ENCODE measurements at regions of chr6 and their contacts with region 1.

Region 1: DNA sequence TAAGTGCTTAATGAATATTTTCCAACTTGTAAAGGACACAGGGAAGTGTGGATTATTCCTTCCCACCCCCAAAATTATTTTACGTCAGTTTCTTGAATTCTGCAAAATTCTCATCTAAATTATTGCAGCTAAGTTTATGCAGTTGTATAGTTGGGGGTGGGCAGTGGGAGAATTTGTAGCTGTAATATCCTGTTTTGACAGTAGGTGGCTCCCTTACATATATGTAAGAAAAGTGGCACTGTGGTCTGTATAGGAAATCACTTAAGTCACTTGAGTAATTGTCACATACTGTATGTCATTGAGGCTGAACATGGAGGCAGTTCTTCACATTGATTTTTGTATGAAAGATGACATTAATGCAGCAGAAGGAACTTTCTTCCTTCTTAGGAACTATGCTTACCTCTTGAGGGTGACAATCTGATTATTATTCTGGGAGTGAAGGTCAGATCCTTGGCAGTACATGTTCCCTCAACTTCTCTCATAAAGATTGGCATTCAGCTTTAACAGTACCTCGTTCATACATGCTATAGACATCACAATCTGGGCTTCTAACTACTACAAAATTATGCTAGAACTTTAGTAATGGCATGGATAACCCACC is 14.7 kb upstream of the CFAP206 start:
- ATAC-seq: peak; percentile 69 to 86 (median 72)
- H3K4me3 ChIP-seq: no peak overlapping the region
- H3K27ac ChIP-seq: no peak overlapping the region
- H3K4me1 ChIP-seq: peaks cover 6% of the 10 kb centered on the region in 2 donors

Region 2: GRCh38 chr6:86558318-86558717 is 834.8 kb before region 1 on chr6:
- in situ Hi-C with region 1: no loop called
- ATAC-seq: no peak
- H3K4me3 ChIP-seq: no peak overlapping the region
- H3K27ac ChIP-seq: no peak overlapping the region
- H3K4me1 ChIP-seq: no peaks in the 10 kb centered on the region

Region 3: DNA sequence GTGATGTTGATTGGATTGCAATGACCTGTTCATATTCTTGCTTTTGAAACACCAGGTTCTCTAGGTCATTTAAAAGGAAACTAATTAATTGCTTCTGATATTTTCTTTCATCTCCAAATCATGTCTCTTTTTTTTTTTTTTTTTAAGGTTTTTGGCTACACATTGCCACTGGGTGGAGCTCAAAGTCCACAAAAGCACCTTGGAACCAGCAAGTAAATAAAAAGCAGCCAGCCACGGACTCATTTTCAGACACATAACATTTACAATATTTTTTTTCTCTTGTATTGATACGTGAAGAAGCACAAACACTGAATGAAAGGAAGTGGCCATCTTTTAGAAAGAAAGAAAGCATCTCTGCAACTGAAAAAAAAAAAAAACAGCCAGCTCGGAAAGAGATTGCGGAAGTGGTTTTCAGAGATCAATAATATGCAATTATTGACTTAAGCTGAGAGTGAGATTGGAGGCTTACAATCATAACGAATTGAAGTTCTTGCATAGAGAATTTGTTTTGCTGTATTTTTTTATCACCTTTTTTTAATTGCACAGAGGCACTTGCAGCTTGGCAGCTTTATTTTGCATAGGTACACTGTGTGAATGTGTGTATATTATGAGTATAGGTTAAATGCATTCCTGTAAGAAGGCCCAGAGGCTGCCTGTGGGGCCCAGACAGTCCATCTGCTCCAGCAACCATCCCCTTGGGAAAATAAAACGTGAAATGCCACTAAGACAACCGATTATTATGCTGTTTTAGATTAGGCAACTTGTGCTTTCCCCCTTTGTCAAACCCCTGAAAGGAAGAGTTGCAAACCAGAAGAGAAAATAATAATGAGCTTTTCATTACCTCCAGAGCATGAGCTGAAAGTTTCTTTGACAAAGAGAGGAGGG is 326.4 kb before region 1 on chr6:
- in situ Hi-C with region 1: loop called in 1 of 9 experiments (anchors 25 kb)
- ATAC-seq: peak in 6 of 8 experiments; percentile 49 to 88 (median 74)
- H3K4me3 ChIP-seq: peak overlapping the region; percentile 0 to 25 (median 19)
- H3K27ac ChIP-seq: no peak overlapping the region
- H3K4me1 ChIP-seq: peaks cover 9 to 12% of the 10 kb centered on the region in 2 donors

Region 4: GRCh38 chr6:87139236-87139635 is 253.9 kb before region 1 on chr6:
- in situ Hi-C with region 1: loop called in 1 of 9 experiments (anchors 25 kb)
- ATAC-seq: peak in 3 of 8 experiments; percentile 74 to 80 (median 76)
- H3K4me3 ChIP-seq: no peak overlapping the region
- H3K27ac ChIP-seq: no peak overlapping the region
- H3K4me1 ChIP-seq: no peaks in the 10 kb centered on the region

Region 5: GRCh38 chr6:87534377-87535047 is 141.4 kb after region 1 on chr6:
- in situ Hi-C with region 1: no loop called
- ATAC-seq: no peak
- H3K4me3 ChIP-seq: no peak overlapping the region
- H3K27ac ChIP-seq: no peak overlapping the region
- H3K4me1 ChIP-seq: no peaks in the 10 kb centered on the region